Heart left ventricle (tissue), 16 donors: ENCODE measurements at regions of chr7 and their contacts with region 1.

Region 1: DNA sequence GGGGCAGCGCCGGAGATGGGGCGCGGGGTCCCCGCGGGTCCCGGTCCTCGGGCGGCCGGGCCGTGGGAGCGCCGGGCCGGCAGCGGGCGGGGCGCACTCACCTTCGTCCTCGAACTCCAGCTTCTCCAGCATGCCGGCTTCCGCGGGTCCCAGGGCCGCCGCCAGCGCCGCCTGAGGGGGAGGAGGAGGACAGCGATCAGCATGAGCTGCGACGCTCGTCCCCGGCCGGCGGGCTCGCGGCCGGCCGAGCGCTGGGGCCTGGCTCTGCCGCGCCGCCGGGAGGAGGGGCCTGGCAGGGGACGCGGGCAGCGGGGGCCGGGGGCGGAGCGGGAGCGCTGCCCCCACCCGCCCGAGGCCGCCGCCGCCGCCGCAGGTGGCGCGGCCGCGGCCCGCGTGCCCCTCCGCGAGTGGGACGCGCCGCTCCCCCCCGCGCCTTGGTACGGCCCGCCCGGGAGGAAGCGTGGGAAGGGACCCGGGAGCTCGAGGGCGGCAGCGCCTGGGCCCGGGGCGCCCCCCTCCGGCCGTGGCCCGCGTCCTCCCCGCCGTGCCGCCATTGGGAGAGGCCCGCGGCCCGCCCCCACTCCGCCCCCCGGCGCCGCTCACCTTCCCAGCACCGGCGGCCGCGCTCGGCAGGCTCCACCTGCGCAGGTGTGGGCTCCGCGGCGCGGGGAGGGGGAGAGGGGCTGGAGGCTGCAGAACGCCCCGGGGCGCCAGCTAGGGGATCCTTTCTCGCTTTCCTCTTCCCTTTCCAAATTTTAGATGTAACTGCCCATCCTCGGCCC is 112.5 kb upstream of the RHEB start:
- DNase-seq: peak; percentile 83 to 94 (median 89)
- ATAC-seq: peak; percentile 49 to 90 (median 84)
- H3K4me3 ChIP-seq: peak overlapping the region; percentile 47 to 94 (median 75)
- H3K27ac ChIP-seq: peak overlapping the region; percentile 85 to 99 (median 94)
- H3K4me1 ChIP-seq: peaks cover 0 to 45% (median 22%) of the 10 kb centered on the region in 12 donors
- H3K27me3 ChIP-seq: no peaks in the 10 kb centered on the region
- CTCF ChIP-seq: peak in 10 of 12 donors; percentile 10 to 59 (median 42)
- POLR2A ChIP-seq: peak in 1 of 2 donors; percentile 43

Region 2: GRCh38 chr7:151519765-151520418 is 112.3 kb before region 1 on chr7 and contains the start of gene RHEB:
- intact Hi-C with region 1: loop called in 3 of 10 experiments (anchors 5 to 10 kb)
- DNase-seq: peak; percentile 98 to 99 (median 99)
- ATAC-seq: peak; percentile 93 to 98 (median 96)
- H3K4me3 ChIP-seq: peak within 1 kb of the TSS; percentile 55 to 98 (median 79)
- H3K27ac ChIP-seq: peak within 1 kb of the TSS; percentile 91 to 100 (median 98)
- H3K4me1 ChIP-seq: peaks cover 0 to 45% (median 28%) of the 10 kb centered on the region in 12 donors
- H3K27me3 ChIP-seq: no peaks in the 10 kb centered on the region
- CTCF ChIP-seq: no peak
- POLR2A ChIP-seq: no peak
- total RNA-seq, gene RHEB: 81.4 to 155 (median 106) TPM

Region 3: DNA sequence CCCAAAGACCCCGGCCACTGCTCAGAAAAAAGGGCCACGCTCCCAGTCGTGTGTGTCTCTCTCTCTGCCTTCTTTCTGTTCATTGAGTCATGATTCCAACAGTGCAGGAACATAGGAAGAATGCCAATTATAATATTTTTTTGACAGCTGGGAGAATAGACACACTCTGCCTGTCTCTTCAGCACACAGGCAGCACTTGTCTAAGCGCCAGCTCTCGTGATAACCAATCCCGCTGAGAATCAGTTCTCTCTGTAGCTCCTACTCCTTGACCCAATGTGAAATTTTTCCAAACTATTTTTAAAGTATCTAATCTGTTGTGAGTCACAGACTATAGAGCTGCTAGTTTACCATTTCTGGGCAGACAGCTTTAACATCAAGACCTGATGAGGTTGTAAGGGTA is 33.2 kb after region 1 on chr7:
- intact Hi-C with region 1: loop called in 1 of 10 experiments (anchors 5 kb)
- DNase-seq: peak; percentile 49 to 84 (median 77)
- ATAC-seq: peak; percentile 63 to 80 (median 76)
- H3K4me3 ChIP-seq: no peak overlapping the region
- H3K27ac ChIP-seq: peak overlapping the region; percentile 48 to 86 (median 76)
- H3K4me1 ChIP-seq: peaks cover 0 to 36% (median 12%) of the 10 kb centered on the region in 12 donors
- H3K27me3 ChIP-seq: no peaks in the 10 kb centered on the region
- CTCF ChIP-seq: no peak
- POLR2A ChIP-seq: no peak

Region 4: DNA sequence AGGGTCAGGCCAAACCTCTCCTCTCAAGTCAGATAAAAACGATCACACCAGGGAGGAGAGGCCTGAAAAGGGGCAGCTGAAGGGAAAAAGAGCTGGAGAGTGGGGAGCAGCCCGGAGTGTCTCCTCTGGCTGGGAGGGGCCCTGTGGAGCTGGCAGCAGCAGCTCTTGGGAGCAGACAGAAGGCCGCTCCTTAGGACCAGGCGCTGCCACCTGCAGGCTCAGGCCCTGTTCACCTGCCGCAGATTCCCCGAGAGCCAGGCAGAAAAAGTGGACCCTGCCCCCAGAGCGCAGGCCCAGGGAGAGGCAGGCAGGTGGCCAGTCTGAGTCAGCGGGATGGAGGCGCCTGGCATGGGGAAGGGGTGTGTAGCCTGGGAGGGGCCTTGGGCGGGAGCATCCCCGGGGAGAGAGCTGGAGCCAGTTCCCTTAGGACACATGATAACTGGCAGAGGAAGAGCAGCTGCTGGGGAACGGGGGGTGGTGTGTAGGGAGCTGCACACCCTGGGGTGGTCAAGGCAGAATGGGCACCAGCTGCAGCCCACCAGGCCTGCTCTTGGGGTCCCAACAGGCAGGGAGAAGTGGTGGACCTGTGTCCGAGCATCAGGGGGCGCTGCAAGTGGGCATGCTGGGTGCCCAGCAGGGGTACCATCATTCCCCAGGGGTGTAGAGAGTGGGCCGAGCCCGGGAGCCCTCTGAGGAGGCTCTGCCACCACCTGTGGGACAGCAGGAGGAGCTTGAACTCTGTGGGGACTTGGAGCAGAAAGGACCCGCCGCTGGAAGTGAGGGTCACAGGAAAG is 64.8 kb after region 1 on chr7:
- intact Hi-C with region 1: loop called in 6 of 10 experiments (anchors 5 to 10 kb)
- DNase-seq: peak in 3 of 5 donors; percentile 47 to 68 (median 48)
- ATAC-seq: peak in 3 of 4 donors; percentile 4 to 23 (median 16)
- H3K4me3 ChIP-seq: no peak overlapping the region
- H3K27ac ChIP-seq: peak overlapping the region in 10 of 12 donors; percentile 48 to 93 (median 74)
- H3K4me1 ChIP-seq: peaks cover 0 to 78% (median 43%) of the 10 kb centered on the region in 12 donors
- H3K27me3 ChIP-seq: no peaks in the 10 kb centered on the region
- CTCF ChIP-seq: no peak
- POLR2A ChIP-seq: no peak

Region 5: DNA sequence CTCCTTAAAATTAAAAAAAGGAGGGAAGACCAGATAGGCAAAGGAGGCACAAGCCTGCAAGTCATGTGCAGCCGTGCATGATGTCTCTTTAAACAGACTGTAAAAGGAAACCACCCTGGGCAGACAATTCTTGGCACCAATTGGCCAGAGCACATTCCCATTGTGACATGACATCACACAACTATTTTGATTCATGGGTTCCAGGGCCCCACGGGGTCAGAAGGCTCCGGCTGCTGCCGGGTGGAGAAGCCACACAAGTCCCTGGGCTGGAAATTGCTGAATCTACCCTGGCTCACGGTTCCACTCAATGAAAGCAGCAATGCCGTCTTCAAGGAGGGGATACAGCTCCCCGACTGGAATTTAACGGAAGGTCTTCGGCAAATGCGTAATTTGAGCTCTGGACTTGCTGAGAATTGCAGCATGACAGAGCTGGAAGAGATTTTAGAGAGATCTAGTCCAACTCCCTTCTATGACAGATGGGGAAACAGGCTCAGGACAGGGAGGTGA is 104.3 kb after region 1 on chr7:
- intact Hi-C with region 1: loop called in 1 of 10 experiments (anchors 5 kb)
- DNase-seq: peak in 4 of 5 donors; percentile 78 to 87 (median 82)
- ATAC-seq: peak; percentile 85 to 95 (median 92)
- H3K4me3 ChIP-seq: peak overlapping the region in 11 of 12 donors; percentile 30 to 63 (median 54)
- H3K27ac ChIP-seq: peak overlapping the region; percentile 82 to 97 (median 90)
- H3K4me1 ChIP-seq: peaks cover 0 to 30% (median 16%) of the 10 kb centered on the region in 12 donors
- H3K27me3 ChIP-seq: no peaks in the 10 kb centered on the region
- CTCF ChIP-seq: peak in 3 of 12 donors; percentile 19 to 30 (median 21)
- POLR2A ChIP-seq: peak in 1 of 2 donors; percentile 31

Region 6: DNA sequence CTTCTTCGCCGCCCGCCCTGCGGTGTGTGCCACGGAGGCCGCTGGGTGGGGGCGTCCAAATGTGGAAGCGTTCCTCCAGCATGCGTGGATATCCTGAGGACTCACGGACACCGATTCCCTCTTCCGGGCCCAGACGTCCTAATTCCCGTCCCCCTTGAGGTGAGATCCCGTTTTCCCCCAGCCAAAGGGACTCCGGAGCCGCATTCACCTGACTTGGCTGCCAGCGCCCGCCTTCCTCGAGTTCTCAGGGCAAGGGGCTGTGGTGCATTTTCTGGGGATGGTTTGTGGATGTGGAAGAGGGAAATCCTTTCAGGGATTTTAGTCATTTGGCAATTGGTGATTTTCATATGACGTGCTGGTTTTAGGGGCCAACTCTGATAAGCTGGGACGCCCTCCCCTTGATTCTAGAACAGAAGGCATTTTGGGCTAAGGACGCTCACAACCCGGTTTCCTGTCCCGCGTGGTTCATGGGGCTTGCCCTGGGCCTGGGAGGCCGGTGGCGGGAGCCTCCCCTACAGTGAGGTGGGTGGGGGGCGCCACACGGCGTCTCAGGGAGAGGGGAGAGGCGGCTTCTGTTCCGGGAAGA is 1292.8 kb after region 1 on chr7:
- intact Hi-C with region 1: no loop called
- DNase-seq: no peak
- ATAC-seq: no peak
- H3K4me3 ChIP-seq: peak overlapping the region; percentile 9 to 54 (median 39)
- H3K27ac ChIP-seq: no peak overlapping the region
- H3K4me1 ChIP-seq: peaks cover 0 to 16% (median 0%) of the 10 kb centered on the region in 12 donors
- H3K27me3 ChIP-seq: peaks cover 10 to 57% (median 30%) of the 10 kb centered on the region in 9 donors
- CTCF ChIP-seq: no peak
- POLR2A ChIP-seq: no peak